CD4-positive, alpha-beta memory T cell (primary cell): ENCODE measurements at regions of chr2 and their contacts with region 1.

Region 1: DNA sequence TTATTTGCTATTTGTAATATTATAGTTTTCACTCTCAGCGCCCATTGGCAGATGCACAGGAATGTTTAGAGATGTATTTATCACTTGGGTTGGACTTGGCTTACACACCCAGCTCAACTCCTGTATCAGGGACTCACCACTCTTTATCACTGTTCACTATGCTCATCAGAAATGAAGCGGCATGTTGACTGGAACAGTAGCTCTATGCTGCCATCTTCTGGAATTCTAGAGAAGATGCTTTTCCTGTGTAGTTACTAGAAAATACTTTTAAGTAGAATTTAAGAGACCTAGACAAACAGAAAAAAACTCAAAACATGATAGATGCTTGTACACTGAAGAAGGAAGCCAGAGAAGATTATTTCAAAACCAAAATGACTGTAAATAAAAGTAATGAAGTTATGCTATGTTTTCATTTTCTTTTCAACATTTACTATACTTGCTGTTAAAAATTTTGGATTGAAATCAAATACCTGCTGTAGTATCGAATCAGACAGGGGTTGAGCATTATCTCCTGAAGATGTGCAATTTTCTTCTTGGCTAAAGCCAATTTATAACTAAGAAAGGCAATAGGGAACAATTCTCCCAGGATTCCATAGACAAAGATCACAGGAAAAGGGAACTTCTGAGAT is 47.4 kb upstream of the NXPH2 start:
- DNase-seq: peak; percentile 36 to 49 (median 43)
- H3K4me3 ChIP-seq: no peak overlapping the region
- H3K4me3 Mint-ChIP-seq: no peak overlapping the region
- H3K27ac ChIP-seq: no peak overlapping the region
- H3K27ac Mint-ChIP-seq: no peak overlapping the region
- H3K4me1 ChIP-seq: no peaks in the 10 kb centered on the region
- H3K4me1 Mint-ChIP-seq: no peaks in the 10 kb centered on the region
- H3K27me3 ChIP-seq: no peaks in the 10 kb centered on the region
- H3K27me3 Mint-ChIP-seq: peaks cover 0 to 2% of the 10 kb centered on the region in 2 donors

Region 2: GRCh38 chr2:137865954-137866540 is 961.5 kb before region 1 on chr2:
- CTCF ChIA-PET with region 1: interaction called, 53 read pairs
- POLR2A ChIA-PET with region 1: no interaction called
- intact Hi-C with region 1: loop called (anchors 1 kb)
- DNase-seq: peak in 4 of 5 donors; percentile 22 to 27 (median 26)
- H3K4me3 ChIP-seq: no peak overlapping the region
- H3K4me3 Mint-ChIP-seq: no peak overlapping the region
- H3K27ac ChIP-seq: no peak overlapping the region
- H3K27ac Mint-ChIP-seq: no peak overlapping the region
- H3K4me1 ChIP-seq: no peaks in the 10 kb centered on the region
- H3K4me1 Mint-ChIP-seq: no peaks in the 10 kb centered on the region
- H3K27me3 ChIP-seq: no peaks in the 10 kb centered on the region
- H3K27me3 Mint-ChIP-seq: peaks cover 0 to 2% of the 10 kb centered on the region in 2 donors

Region 3: DNA sequence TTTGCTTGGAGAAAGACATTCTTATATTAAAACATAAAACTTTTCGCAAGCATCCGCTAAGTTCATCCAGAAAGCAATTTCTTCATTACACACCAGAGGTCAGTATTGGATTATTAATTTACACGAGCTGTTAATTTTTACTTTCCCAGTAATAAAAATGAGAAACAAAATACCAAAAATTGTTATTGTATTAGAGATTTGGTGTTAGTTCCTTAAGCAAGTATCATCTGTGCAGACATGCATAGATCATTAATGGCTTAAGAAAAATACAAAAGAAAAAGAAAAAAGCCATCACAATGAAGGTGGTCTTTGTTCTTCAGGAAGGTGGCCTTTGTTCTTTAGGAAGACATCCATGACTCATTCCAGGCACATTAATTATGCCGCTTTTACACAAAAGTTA is 916.9 kb before region 1 on chr2:
- CTCF ChIA-PET with region 1: interaction called, 26 read pairs
- POLR2A ChIA-PET with region 1: no interaction called
- intact Hi-C with region 1: no loop called
- DNase-seq: no peak
- H3K4me3 ChIP-seq: no peak overlapping the region
- H3K4me3 Mint-ChIP-seq: no peak overlapping the region
- H3K27ac ChIP-seq: no peak overlapping the region
- H3K27ac Mint-ChIP-seq: no peak overlapping the region
- H3K4me1 ChIP-seq: no peaks in the 10 kb centered on the region
- H3K4me1 Mint-ChIP-seq: no peaks in the 10 kb centered on the region
- H3K27me3 ChIP-seq: no peaks in the 10 kb centered on the region
- H3K27me3 Mint-ChIP-seq: no peaks in the 10 kb centered on the region

Region 4: GRCh38 chr2:137947728-137948336 is 879.7 kb before region 1 on chr2:
- CTCF ChIA-PET with region 1: interaction called, 11 read pairs
- POLR2A ChIA-PET with region 1: no interaction called
- intact Hi-C with region 1: no loop called
- DNase-seq: peak in 1 of 5 donors; percentile 14
- H3K4me3 ChIP-seq: no peak overlapping the region
- H3K4me3 Mint-ChIP-seq: no peak overlapping the region
- H3K27ac ChIP-seq: no peak overlapping the region
- H3K27ac Mint-ChIP-seq: no peak overlapping the region
- H3K4me1 ChIP-seq: no peaks in the 10 kb centered on the region
- H3K4me1 Mint-ChIP-seq: peaks cover 0 to 2% (median under 1%) of the 10 kb centered on the region in 4 donors
- H3K27me3 ChIP-seq: no peaks in the 10 kb centered on the region
- H3K27me3 Mint-ChIP-seq: no peaks in the 10 kb centered on the region

Region 5: GRCh38 chr2:138476940-138477339 is 350.6 kb before region 1 on chr2:
- CTCF ChIA-PET with region 1: interaction called, 3 read pairs
- POLR2A ChIA-PET with region 1: no interaction called
- intact Hi-C with region 1: loop called (anchors 1 kb)
- DNase-seq: no peak
- H3K4me3 ChIP-seq: no peak overlapping the region
- H3K4me3 Mint-ChIP-seq: no peak overlapping the region
- H3K27ac ChIP-seq: no peak overlapping the region
- H3K27ac Mint-ChIP-seq: no peak overlapping the region
- H3K4me1 ChIP-seq: no peaks in the 10 kb centered on the region
- H3K4me1 Mint-ChIP-seq: no peaks in the 10 kb centered on the region
- H3K27me3 ChIP-seq: no peaks in the 10 kb centered on the region
- H3K27me3 Mint-ChIP-seq: no peaks in the 10 kb centered on the region